Activated CD8-positive, alpha-beta T cell treated with anti-CD3 and anti-CD28 coated beads for 36 hours (primary cell): ENCODE measurements at regions of chr1 and their contacts with region 1.

Region 1: GRCh38 chr1:116514708-116515525 is 55.9 kb downstream of the CD58 start:
- DNase-seq: peak; percentile 76
- ATAC-seq: peak; percentile 91
- H3K4me3 Mint-ChIP-seq: peak overlapping the region; percentile 42
- H3K27ac Mint-ChIP-seq: peak overlapping the region; percentile 89
- H3K4me1 Mint-ChIP-seq: peaks cover 50% of the 10 kb centered on the region
- H3K27me3 Mint-ChIP-seq: no peaks in the 10 kb centered on the region
- CTCF ChIP-seq: no peak

Region 2: GRCh38 chr1:115753830-115754229 is 761.1 kb before region 1 on chr1:
- CTCF ChIA-PET with region 1: no interaction called
- POLR2A ChIA-PET with region 1: no interaction called
- intact Hi-C with region 1: no loop called
- DNase-seq: no peak
- ATAC-seq: no peak
- H3K4me3 Mint-ChIP-seq: no peak overlapping the region
- H3K27ac Mint-ChIP-seq: no peak overlapping the region
- H3K4me1 Mint-ChIP-seq: no peaks in the 10 kb centered on the region
- H3K27me3 Mint-ChIP-seq: peaks cover 10% of the 10 kb centered on the region
- CTCF ChIP-seq: no peak

Region 3: DNA sequence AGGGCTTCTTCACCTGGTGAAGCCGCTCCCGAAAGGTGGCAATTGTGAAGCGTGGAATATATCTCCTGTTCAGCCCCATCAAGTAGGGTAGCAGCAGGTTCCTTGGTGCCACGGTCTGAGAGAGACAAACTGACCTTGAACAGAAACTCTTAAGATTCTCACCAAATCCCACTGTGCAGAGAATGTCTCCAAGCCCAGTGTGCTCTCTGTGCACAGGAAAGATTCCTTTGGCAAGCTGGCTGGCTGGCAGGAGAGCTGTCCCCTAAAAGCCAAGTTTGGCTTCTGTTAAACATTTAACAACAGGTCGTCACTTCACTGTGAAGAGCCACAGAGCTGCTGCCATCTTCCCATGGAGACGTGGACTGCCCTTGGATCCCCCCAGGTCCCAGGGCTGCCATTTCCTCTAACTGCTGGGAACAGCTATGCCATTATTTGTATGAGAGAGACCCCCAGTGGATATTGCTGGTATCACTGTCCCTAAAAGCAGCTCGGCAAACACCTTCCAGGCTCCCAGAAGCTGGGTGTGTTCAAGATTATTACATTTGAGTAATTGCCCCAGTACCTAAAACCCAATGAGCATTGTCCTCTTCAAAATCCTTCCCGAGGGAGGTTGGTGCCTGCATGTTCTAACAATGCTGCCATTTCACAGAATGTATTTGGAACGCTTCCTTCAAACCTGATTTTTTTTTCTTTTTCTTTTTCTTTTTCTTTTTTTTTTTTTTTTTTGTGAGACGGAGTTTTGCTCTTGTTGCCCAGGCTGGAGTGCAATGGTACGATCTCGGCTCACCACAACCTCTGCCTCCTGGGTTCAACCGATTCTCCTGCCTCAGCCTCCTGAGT is 15.9 kb before region 1 on chr1:
- CTCF ChIA-PET with region 1: interaction called, 24 read pairs
- POLR2A ChIA-PET with region 1: interaction called, 6 read pairs
- intact Hi-C with region 1: no loop called
- DNase-seq: peak; percentile 67
- ATAC-seq: peak; percentile 78
- H3K4me3 Mint-ChIP-seq: no peak overlapping the region
- H3K27ac Mint-ChIP-seq: no peak overlapping the region
- H3K4me1 Mint-ChIP-seq: peaks cover 23% of the 10 kb centered on the region
- H3K27me3 Mint-ChIP-seq: no peaks in the 10 kb centered on the region
- CTCF ChIP-seq: peak; percentile 88

Region 4: DNA sequence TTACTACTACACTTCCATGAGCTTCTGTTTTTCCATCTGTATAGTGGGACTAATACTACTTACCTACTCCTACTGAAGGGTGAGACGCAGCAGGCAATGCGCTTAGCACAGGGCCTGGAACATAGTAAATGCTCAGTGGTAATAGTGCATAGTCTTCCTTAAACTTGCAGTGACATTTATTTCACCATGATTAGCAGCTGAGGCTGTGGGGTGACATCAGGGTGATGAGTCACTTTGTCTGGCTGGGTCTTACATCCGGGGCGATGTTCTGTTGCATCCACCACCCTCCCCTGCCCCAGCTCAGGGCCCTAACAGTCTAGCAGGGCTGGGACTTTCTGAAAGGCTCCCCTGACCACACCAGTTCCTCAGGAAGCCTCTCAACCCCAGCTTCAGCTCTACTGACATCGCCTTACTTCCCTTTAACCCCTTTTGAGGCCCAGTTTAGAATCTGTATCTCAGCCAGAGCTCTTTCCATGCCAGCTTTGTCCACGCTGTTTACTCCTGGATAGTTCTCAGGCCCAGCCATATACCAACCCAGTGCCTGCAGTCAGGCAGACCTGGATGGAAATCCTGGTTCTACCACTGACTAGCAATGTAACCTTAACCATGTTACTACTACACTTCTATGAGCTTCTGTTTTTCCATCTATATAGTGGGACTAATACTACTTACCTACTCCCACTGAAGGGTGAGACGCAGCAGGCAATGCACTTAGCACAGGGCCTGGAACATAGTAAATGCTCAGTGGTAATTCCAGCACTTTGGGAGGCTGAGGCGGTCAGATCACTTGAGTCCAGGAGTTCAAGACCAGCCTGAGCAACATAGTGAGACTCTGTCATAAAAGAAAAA is 10.4 kb before region 1 on chr1:
- CTCF ChIA-PET with region 1: interaction called, 24 read pairs
- POLR2A ChIA-PET with region 1: interaction called, 8 read pairs
- intact Hi-C with region 1: no loop called
- DNase-seq: peak; percentile 96
- ATAC-seq: peak; percentile 90
- H3K4me3 Mint-ChIP-seq: peak overlapping the region; percentile 13
- H3K27ac Mint-ChIP-seq: peak overlapping the region; percentile 95
- H3K4me1 Mint-ChIP-seq: peaks cover 62% of the 10 kb centered on the region
- H3K27me3 Mint-ChIP-seq: no peaks in the 10 kb centered on the region
- CTCF ChIP-seq: no peak

Region 5: DNA sequence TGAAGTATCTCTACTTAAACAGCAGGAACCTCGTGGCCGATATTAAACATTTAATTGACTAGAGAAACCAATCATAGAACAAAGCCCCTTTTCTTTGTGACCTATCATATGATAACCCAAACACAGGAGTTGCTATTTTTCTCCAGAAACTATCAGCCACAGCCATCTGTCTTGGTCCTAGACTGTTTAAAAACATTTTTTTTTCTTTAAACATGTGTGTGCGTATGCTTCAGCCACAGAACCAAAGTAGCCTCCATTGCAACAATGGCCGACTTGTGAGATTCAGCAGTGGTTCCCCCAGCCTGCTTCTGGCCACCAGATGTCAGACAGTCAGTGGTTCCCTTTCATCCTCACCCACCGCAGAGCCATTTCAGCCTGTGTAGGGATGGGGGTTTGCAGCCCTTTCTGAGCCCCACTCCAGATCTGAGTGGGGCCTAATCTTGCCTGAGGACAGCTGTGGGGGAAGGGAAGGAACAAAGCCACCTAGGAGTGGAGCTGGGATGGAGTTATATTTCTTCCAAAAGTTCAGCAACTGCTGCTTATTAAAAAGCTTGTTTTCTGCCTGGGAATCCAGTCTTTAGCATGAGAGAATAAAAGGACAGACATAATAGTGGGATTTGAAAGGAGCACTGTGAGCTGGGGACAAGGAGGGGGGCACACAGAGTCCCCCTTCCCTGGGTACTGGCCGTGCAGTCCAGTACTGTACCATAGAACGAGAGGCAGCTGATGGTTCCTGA is 164.3 kb after region 1 on chr1:
- CTCF ChIA-PET with region 1: no interaction called
- POLR2A ChIA-PET with region 1: no interaction called
- intact Hi-C with region 1: no loop called
- DNase-seq: no peak
- ATAC-seq: no peak
- H3K4me3 Mint-ChIP-seq: no peak overlapping the region
- H3K27ac Mint-ChIP-seq: no peak overlapping the region
- H3K4me1 Mint-ChIP-seq: no peaks in the 10 kb centered on the region
- H3K27me3 Mint-ChIP-seq: peaks cover 16% of the 10 kb centered on the region
- CTCF ChIP-seq: no peak

Region 6: DNA sequence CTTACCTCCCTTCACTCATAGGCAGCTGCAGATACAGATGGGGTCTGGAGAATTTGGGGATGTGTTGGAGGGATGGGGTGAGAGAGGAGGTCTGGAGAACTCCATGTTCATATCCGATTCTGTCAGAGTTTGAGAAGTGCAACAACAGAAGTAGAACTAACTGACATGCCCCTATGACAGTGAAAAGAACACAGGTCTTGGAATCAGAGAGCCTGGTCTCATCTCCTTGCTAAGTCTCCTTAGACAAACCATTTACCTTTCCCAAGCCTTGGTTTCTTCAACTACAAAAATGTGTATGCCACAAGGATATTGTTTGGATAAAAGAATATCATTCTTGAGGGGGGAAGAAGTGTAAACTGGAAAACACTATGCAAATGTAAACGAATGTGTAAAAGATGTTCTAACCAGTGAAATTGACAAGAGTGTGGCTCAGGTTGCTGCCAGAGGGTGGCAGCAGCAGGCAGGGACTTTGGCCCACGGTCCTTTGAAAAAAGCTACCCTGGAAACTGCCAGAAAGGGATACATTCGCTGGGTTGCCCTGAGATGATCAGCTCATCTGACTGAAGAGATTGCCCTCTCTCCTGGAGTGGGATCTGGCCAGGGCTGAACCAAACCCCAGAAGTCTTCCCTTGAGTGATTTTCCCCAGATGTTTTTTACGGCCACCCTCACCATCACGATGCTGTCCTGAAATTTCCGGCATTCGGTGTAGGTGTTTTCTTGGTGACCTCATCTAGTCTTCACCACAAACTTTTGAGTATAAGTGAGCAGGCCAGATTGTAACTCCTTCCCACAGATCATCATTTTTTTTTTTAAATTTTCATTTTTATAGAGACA is 222.3 kb after region 1 on chr1:
- CTCF ChIA-PET with region 1: no interaction called
- POLR2A ChIA-PET with region 1: no interaction called
- intact Hi-C with region 1: no loop called
- DNase-seq: peak; percentile 86
- ATAC-seq: peak; percentile 60
- H3K4me3 Mint-ChIP-seq: peak overlapping the region; percentile 76
- H3K27ac Mint-ChIP-seq: peak overlapping the region; percentile 100
- H3K4me1 Mint-ChIP-seq: peaks cover 68% of the 10 kb centered on the region
- H3K27me3 Mint-ChIP-seq: no peaks in the 10 kb centered on the region
- CTCF ChIP-seq: peak; percentile 91